Activated B cell treated with CpG ODN at 0.5 μM for 24 hours (primary cell): ENCODE measurements at regions of chr20 and their contacts with region 1.

Region 1: GRCh38 chr20:44966030-44966961 is at the start of gene STK4:
- DNase-seq: peak; percentile 98
- ATAC-seq: peak; percentile 78
- H3K4me3 Mint-ChIP-seq: peak within 1 kb of the TSS; percentile 99
- H3K27ac Mint-ChIP-seq: peak within 1 kb of the TSS; percentile 97
- H3K4me1 Mint-ChIP-seq: peaks cover 67% of the 10 kb centered on the region
- H3K27me3 Mint-ChIP-seq: no peaks in the 10 kb centered on the region
- CTCF ChIP-seq: no peak
- total RNA-seq, gene STK4: 219 and 245 TPM in 2 replicates

Region 2: GRCh38 chr20:44582311-44583025 is 383.8 kb before region 1 on chr20 and contains the start of gene PKIG:
- CTCF ChIA-PET with region 1: no interaction called
- POLR2A ChIA-PET with region 1: interaction called, 14 read pairs
- intact Hi-C with region 1: loop called (anchors 2 kb)
- DNase-seq: no peak
- ATAC-seq: no peak
- H3K4me3 Mint-ChIP-seq: peak within 1 kb of the TSS; percentile 94
- H3K27ac Mint-ChIP-seq: peak within 1 kb of the TSS; percentile 96
- H3K4me1 Mint-ChIP-seq: peaks cover 79% of the 10 kb centered on the region
- H3K27me3 Mint-ChIP-seq: no peaks in the 10 kb centered on the region
- CTCF ChIP-seq: no peak
- total RNA-seq, gene PKIG: 181 and 191 TPM in 2 replicates

Region 3: DNA sequence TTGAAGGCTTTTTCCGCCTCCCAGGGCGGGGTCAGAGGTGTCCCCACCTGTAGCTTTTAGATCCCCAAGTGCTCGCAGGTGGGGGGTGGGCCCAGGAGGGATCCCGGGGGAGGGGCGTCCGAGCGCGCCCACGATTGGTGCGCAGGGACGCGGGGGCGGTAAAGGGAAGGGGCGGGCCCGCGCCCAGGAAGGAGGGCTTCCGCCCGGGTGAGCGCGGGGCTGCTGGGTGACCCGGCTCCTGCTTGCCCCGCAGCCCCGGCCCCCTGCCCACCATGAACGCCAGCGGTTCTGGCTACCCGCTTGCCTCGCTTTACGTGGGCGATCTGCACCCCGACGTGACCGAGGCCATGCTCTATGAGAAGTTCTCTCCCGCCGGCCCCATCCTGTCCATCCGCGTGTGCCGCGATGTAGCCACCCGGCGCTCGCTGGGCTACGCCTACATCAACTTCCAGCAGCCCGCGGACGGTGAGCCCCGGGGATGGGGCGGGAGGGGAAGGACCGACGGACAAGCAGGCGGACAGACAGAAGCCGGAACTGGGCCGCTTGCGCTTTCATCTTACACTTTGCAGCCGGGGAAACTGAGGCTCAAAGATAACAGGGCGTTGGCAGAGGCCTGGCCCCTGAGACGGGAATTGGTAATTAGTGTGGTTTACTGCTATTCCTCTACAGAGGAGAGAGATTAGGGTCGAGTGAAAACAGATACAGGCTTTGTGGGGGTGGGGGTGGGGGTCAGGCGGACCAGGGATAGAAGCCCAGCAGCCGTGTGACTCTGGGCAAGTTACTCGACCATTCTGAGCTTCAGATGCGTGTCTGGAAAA is 56.2 kb before region 1 on chr20 and contains the start of gene PABPC1L:
- CTCF ChIA-PET with region 1: no interaction called
- POLR2A ChIA-PET with region 1: interaction called, 9 read pairs
- intact Hi-C with region 1: loop called (anchors 2 kb)
- DNase-seq: peak; percentile 72
- ATAC-seq: peak; percentile 98
- H3K4me3 Mint-ChIP-seq: peak within 1 kb of the TSS; percentile 89
- H3K27ac Mint-ChIP-seq: no peak within 1 kb of the TSS
- H3K4me1 Mint-ChIP-seq: peaks cover 18% of the 10 kb centered on the region
- H3K27me3 Mint-ChIP-seq: no peaks in the 10 kb centered on the region
- CTCF ChIP-seq: no peak
- total RNA-seq, gene PABPC1L: 49.5 and 61.1 TPM in 2 replicates

Region 4: DNA sequence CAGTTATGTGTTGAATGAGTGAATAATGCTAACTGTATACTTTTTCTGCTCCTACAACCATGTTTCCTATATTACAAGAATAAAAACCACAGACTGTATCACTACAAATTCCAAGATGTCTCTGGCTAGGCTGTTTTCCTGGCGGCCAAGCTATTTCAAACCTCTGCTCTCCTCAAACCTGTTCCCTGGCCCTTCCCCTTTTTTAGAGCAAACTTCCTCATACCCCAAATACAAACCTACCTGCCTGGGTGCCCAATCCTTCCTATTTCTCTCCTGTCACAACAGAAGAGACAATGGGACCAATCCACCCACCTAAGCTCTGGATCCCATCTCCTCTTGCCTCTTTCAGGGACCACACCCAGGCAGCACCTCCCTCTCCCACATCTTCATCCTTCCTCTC is 13.6 kb before region 1 on chr20:
- CTCF ChIA-PET with region 1: no interaction called
- POLR2A ChIA-PET with region 1: no interaction called
- intact Hi-C with region 1: no loop called
- DNase-seq: no peak
- ATAC-seq: no peak
- H3K4me3 Mint-ChIP-seq: no peak overlapping the region
- H3K27ac Mint-ChIP-seq: peak overlapping the region; percentile 42
- H3K4me1 Mint-ChIP-seq: peaks cover 50% of the 10 kb centered on the region
- H3K27me3 Mint-ChIP-seq: no peaks in the 10 kb centered on the region
- CTCF ChIP-seq: no peak

Region 5: DNA sequence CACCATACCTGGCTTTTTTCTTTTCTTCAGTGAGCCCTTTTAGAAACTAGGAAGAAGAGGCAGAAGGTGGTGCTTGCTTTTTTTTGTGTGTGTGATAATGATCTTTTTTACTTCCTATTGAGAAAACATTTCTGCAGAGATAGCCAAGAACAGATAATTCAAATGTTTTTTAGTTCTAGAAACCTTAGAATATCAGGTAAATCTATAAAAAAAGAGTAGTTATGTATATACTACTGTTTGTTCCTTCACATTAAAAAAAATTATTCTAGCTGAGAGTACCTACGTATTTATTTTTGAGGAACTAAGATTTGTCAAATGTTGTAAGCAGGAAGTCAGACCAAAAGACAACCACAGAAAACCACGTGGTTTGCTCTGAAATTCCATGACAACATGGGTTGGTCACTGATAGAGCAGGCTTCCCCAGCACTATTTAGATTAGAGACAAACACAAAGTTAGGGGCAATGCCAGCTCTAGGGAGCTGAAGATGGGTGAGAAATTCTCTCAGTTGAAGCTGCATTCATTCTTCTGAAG is 12.9 kb after region 1 on chr20:
- CTCF ChIA-PET with region 1: interaction called, 20 read pairs
- POLR2A ChIA-PET with region 1: interaction called, 153 read pairs
- intact Hi-C with region 1: loop called (anchors 1 kb)
- DNase-seq: no peak
- ATAC-seq: peak; percentile 91
- H3K4me3 Mint-ChIP-seq: peak overlapping the region; percentile 59
- H3K27ac Mint-ChIP-seq: peak overlapping the region; percentile 97
- H3K4me1 Mint-ChIP-seq: peaks cover 79% of the 10 kb centered on the region
- H3K27me3 Mint-ChIP-seq: no peaks in the 10 kb centered on the region
- CTCF ChIP-seq: no peak

Region 6: DNA sequence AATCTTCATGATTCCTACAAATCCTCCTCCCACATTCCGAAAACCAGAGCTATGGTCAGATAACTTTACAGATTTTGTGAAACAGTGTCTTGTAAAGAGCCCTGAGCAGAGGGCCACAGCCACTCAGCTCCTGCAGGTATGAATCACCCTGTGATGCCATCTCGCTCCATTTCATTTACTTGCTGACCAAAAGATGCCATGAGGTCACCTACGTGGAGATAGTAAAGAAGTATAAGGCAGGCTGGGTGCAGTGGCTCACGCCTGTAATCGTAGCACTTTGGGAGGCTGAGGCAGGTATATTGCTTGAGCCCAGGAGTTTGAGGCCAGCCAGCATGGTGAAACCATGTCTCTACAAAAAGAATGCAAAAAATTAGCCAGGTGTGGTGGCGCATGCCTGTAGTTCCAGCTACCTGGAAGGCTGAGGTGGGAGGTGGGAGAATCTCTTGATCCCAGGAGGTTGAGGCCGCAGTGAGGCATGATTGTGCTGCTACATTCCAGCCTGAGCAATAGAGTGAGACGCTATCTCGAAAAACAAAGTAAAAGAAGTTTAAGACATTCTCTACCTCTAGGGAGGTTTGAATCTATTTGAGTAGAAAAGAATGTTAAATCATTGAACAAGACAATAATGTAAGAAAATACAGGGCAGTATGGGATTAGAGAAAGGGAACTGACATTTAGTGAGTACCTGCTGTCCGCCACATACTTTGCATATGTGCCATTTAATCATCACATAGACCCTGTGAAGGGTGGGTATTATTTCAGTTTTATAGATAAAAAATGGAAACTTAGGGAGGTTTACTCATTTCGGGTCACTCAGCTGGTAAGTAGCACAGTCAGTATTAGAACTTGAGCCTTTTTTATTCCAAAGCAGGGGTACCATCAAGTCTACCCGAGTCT is 31.1 kb after region 1 on chr20:
- CTCF ChIA-PET with region 1: interaction called, 3 read pairs
- POLR2A ChIA-PET with region 1: interaction called, 20 read pairs
- intact Hi-C with region 1: loop called (anchors 2 kb)
- DNase-seq: no peak
- ATAC-seq: peak; percentile 95
- H3K4me3 Mint-ChIP-seq: peak overlapping the region; percentile 67
- H3K27ac Mint-ChIP-seq: peak overlapping the region; percentile 87
- H3K4me1 Mint-ChIP-seq: peaks cover 52% of the 10 kb centered on the region
- H3K27me3 Mint-ChIP-seq: no peaks in the 10 kb centered on the region
- CTCF ChIP-seq: no peak

Region 7: DNA sequence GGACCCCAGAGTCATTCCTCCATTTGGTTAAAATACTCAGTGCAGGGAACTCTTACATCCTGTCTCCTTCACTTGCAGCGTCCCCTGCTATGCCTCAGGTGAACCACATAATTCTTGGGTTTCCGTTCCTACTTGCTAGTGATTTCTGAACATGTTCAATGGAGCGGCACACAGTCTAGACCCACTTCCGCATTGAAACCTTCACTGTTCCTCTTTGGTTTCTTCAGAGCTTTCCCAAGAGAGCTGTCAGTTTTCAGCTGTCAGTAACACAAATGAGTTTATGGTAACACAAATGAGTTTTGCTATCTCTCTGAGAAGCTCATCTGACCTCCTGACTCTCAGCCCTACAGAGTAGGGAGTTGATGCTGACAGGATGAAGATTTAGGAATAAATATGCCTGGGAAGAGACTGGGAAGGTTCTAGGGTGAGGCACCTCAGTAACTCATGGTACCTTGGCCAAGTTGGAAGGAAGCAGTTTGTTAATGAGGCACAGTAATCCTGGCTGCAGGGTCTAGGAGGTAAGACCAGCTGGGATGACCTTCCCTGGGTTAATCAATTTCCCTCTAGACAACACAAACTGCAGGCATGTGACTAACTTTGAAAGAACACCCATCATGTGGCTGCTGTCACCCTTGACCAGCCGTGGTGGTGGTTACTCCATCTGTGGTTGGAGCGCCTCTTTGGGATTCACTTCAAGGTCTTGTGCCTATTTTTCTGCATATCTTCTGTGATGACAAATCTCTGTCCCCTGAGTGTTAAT is 402.1 kb after region 1 on chr20:
- CTCF ChIA-PET with region 1: interaction called, 3 read pairs
- POLR2A ChIA-PET with region 1: interaction called, 5 read pairs
- intact Hi-C with region 1: loop called (anchors 5 kb)
- DNase-seq: peak; percentile 52
- ATAC-seq: peak; percentile 82
- H3K4me3 Mint-ChIP-seq: peak overlapping the region; percentile 77
- H3K27ac Mint-ChIP-seq: peak overlapping the region; percentile 86
- H3K4me1 Mint-ChIP-seq: peaks cover 91% of the 10 kb centered on the region
- H3K27me3 Mint-ChIP-seq: no peaks in the 10 kb centered on the region
- CTCF ChIP-seq: no peak

Region 8: DNA sequence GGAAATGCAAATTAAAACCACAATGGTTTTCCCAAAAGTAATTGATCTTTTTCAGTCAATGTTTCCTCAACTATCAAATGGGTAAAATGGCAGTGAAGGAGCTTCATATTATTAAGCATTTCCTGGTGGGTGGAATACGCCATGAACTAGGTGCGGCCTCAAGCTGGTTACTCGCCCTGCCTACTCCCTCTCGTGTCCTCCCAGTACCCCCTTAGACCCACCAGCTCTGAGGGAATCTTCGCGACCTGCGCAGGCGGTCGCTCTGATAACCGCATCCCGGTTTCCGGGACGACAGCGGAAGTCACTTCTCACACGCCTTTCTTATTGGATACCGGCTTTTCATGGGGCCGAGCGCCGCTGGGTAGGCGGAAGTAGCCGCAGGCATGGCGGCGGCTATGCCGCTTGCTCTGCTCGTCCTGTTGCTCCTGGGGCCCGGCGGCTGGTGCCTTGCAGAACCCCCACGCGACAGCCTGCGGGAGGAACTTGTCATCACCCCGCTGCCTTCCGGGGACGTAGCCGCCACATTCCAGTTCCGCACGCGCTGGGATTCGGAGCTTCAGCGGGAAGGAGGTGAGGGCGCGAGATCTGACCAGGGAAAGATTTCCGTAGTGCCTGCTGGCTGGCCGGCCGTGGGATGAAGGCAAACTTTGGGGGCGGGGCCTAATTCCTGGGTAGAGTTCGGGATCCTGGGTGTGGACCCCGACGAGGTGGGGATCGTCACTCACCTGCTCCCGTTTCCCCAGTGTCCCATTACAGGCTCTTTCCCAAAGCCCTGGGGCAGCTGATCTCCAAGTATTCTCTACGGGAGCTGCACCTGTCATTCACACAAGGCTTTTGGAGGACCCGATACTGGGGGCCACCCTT is 449.7 kb after region 1 on chr20 and contains the start of gene PIGT:
- CTCF ChIA-PET with region 1: no interaction called
- POLR2A ChIA-PET with region 1: interaction called, 3 read pairs
- intact Hi-C with region 1: loop called (anchors 5 kb)
- DNase-seq: peak; percentile 75
- ATAC-seq: peak; percentile 86
- H3K4me3 Mint-ChIP-seq: peak within 1 kb of the TSS; percentile 96
- H3K27ac Mint-ChIP-seq: peak within 1 kb of the TSS; percentile 98
- H3K4me1 Mint-ChIP-seq: peaks cover 58% of the 10 kb centered on the region
- H3K27me3 Mint-ChIP-seq: no peaks in the 10 kb centered on the region
- CTCF ChIP-seq: no peak
- total RNA-seq, gene PIGT: 65.8 and 74.5 TPM in 2 replicates